Natural killer cell (primary cell): ENCODE measurements at regions of chr2 and their contacts with region 1.

Region 1: GRCh38 chr2:172931918-172932520 is 143.6 kb upstream of the MAP3K20 start:
- DNase-seq: peak in 1 of 2 donors; percentile 81
- ATAC-seq: peak in 1 of 3 donors; percentile 65
- H3K4me3 ChIP-seq: no peak overlapping the region
- H3K4me3 Mint-ChIP-seq: no peak overlapping the region
- H3K27ac ChIP-seq: no peak overlapping the region
- H3K27ac Mint-ChIP-seq: no peak overlapping the region
- H3K4me1 ChIP-seq: no peaks in the 10 kb centered on the region
- H3K4me1 Mint-ChIP-seq: peaks cover 4 to 6% of the 10 kb centered on the region in 2 donors
- H3K27me3 ChIP-seq: no peaks in the 10 kb centered on the region
- H3K27me3 Mint-ChIP-seq: peaks cover 21 to 23% of the 10 kb centered on the region in 2 donors
- CTCF ChIP-seq: peak; percentile 67

Region 2: DNA sequence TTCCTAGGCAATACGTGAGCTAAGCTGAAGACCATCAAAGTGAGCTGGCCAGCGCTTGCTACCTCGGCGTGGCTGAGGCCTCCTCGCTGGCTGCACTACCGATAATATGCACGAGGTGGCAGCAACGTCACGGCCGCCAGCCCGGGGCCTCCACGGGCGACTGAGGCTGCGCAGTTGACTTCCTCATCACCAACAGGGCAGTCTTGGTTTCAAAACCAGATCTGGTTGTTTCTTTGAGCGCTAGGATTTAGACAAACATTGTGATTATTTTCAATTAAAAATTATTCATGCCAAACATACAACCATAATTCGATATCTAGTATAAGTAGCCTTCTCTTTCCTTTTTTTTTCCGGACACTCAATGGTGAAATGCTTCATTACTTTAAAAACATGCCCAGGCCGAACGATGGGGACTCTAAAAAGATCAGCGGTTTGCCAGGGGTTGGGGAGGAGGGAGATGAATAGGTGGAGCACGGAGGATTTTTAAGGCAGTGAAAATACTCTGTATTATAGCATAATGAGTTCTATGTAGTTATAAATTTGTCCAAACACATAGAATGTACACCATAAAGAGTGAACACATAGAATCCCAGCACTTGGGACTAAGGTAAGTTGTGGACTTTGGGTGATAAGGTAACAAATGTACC is 1357.7 kb before region 1 on chr2:
- intact Hi-C with region 1: loop called (anchors 5 kb)
- DNase-seq: peak; percentile 80 to 88
- ATAC-seq: peak; percentile 96 to 100 (median 100)
- H3K4me3 ChIP-seq: no peak overlapping the region
- H3K4me3 Mint-ChIP-seq: no peak overlapping the region
- H3K27ac ChIP-seq: no peak overlapping the region
- H3K27ac Mint-ChIP-seq: peak overlapping the region in 1 of 2 donors; percentile 8
- H3K4me1 ChIP-seq: no peaks in the 10 kb centered on the region
- H3K4me1 Mint-ChIP-seq: no peaks in the 10 kb centered on the region
- H3K27me3 ChIP-seq: no peaks in the 10 kb centered on the region
- H3K27me3 Mint-ChIP-seq: peaks cover 0 to 2% of the 10 kb centered on the region in 2 donors
- CTCF ChIP-seq: peak; percentile 95

Region 3: DNA sequence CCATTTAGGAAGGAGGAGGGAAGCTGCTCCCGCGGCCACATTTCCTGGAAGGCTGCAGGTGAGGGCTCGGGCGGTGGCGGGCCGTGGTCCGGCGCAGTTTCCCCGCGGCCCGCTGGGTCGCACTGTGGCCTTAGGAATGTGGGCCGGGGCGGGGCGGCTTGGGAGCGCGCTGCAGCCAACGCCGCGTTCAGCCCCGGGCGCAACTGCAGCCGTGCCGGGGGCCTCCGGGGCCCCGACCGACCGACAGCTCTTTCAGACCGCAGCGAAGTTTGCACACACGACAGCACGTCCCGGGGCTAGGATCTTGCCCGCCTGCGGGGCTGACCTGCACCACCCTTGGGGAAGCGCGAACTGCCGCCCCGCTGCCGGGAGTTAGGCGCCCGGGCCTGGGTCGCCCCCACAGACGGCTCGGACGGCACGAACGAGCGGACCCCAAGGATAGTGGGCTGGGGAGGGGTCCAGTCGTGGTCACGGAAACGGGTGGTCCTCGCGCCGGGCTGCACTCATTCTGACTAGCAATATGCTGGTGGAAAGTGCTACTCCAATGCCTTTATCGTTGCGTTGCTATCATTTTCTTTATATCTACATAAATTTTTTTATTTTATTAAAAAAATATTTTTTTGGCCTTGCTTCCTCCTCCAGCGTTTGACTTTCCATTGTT is 759.4 kb before region 1 on chr2:
- intact Hi-C with region 1: loop called (anchors 5 kb)
- DNase-seq: peak; percentile 48 to 77
- ATAC-seq: peak; percentile 81 to 96 (median 96)
- H3K4me3 ChIP-seq: peak overlapping the region; percentile 41
- H3K4me3 Mint-ChIP-seq: peak overlapping the region; percentile 62
- H3K27ac ChIP-seq: no peak overlapping the region
- H3K27ac Mint-ChIP-seq: no peak overlapping the region
- H3K4me1 ChIP-seq: peaks cover 5% of the 10 kb centered on the region
- H3K4me1 Mint-ChIP-seq: peaks cover 11 to 13% of the 10 kb centered on the region in 2 donors
- H3K27me3 ChIP-seq: peaks cover 4% of the 10 kb centered on the region
- H3K27me3 Mint-ChIP-seq: peaks cover 9 to 10% of the 10 kb centered on the region in 2 donors
- CTCF ChIP-seq: peak; percentile 58